Sciatic nerve (tissue), 2 donors: ENCODE measurements at regions of chr17 and their contacts with region 1.

Region 1: DNA sequence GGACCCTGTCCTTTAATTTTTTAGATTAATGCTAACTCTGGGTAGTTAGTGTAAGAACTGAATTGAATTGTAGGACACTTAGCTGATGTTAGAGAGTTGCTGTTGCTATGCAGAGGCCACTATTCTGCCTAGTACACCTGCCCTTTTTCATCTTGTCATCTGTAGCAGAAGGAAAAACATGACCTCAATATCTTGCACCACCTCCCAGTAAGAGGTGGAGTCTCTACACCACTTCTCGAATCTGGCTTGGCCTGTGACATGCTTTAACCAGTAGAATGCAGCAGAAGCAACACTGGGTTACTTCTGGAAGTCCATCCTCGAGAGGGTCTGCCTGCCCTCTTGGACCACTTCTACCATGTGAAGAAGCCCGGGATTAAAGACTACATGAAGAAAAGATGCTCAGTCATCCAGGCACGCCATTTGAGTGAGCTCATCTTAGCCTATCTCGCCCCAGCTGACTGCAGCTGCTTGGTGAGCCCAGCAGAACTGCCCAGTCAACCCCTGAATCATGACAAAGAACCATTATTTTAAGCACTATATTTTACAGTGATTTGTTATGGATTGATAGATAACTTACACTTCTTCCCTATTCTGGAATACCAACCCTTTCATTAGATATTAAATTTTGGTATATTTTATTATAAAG is 153.5 kb downstream of the MYO1D start:
- DNase-seq: no peak
- ATAC-seq: no peak

Region 2: GRCh38 chr17:30886187-30886586 is 1837.2 kb before region 1 on chr17:
- intact Hi-C with region 1: no loop called
- DNase-seq: peak; percentile 18
- ATAC-seq: no peak

Region 3: DNA sequence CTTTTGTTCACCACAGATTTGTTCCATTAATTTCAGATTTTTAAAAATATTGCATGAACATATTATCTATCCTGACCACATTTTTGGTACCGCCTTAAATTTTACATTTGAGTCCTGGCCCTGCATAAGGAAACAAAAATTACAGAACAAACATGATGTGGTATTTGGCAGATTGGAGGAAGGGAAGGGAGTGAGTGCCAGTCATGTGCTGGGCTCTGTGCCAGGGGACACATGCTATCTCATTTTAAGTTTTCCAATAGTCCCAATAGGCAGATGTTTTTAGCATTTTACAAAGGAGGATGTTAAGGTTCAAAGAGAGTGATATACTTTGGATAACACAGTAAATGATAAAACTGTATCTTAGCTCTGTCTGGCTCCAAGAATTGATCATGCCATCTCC is 51.5 kb before region 1 on chr17:
- intact Hi-C with region 1: no loop called
- DNase-seq: peak; percentile 74
- ATAC-seq: peak; percentile 39

Region 4: GRCh38 chr17:34542700-34543336 is 1819.4 kb after region 1 on chr17:
- intact Hi-C with region 1: loop called (anchors 5 kb)
- DNase-seq: no peak
- ATAC-seq: no peak